Activated T-helper 2 cell treated with anti-CD3 and anti-CD28 coated beads, Interferon-gamma antibody, Interleukin-2, Interleukin-4, amounts not matched to agents 10 μg/mL and 5 μg/mL and 100 μg/mL, durations not matched to agents 14 hours and 24 hours and 36 hours (primary cell): ENCODE measurements at regions of chr7 and their contacts with region 1.

Region 1: DNA sequence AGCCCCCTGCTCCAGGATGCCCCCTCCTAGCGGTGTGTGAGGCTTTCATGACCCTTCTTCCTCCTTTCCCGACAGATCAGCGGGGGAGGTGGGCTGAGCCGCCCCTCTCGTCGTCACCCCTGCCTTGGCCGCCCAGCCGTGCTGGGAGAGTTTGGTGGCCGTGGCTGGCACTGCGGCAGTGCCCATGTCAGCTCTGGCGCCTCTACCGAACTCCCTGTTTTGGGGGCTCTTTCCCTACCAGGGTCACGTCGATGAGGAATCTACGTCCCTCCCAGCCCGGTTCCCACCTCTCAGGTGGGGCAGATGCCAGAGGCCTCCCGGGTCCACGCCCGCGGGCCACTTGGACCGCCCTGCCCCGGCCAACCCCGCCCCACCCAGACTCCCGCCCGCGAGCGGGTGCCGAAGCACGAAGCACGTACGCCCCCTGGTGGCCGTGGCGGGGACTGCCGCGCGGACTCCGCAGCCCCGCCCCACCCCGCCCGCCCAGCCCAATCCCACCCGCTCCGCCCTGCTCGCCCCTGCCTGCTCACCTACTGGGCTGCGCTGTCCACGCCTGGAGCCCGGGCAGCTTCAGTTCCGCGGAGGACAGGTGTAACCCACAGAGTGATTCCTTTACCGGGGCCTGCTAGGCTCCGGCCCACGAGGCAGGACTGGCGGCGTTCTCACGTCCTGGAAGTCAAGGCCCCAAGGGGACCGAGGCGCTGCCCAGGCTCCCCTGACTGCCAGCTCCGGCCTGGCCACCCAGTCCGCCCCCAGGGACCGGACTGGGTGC is 127.1 kb downstream of the UBE2H start:
- DNase-seq: peak; percentile 80
- H3K4me3 Mint-ChIP-seq: peak overlapping the region; percentile 91
- H3K27ac Mint-ChIP-seq: peak overlapping the region; percentile 52
- H3K4me1 Mint-ChIP-seq: peaks cover 14% of the 10 kb centered on the region
- H3K27me3 Mint-ChIP-seq: peaks cover 4% of the 10 kb centered on the region

Region 2: GRCh38 chr7:129224251-129225205 is 601.2 kb before region 1 on chr7 and contains the start of gene AHCYL2:
- intact Hi-C with region 1: loop called (anchors 1 kb)
- DNase-seq: peak; percentile 94
- H3K4me3 Mint-ChIP-seq: peak within 1 kb of the TSS; percentile 94
- H3K27ac Mint-ChIP-seq: peak within 1 kb of the TSS; percentile 96
- H3K4me1 Mint-ChIP-seq: peaks cover 22% of the 10 kb centered on the region
- H3K27me3 Mint-ChIP-seq: no peaks in the 10 kb centered on the region
- total RNA-seq, gene AHCYL2: 14.7 and 15.1 TPM in 2 replicates

Region 3: DNA sequence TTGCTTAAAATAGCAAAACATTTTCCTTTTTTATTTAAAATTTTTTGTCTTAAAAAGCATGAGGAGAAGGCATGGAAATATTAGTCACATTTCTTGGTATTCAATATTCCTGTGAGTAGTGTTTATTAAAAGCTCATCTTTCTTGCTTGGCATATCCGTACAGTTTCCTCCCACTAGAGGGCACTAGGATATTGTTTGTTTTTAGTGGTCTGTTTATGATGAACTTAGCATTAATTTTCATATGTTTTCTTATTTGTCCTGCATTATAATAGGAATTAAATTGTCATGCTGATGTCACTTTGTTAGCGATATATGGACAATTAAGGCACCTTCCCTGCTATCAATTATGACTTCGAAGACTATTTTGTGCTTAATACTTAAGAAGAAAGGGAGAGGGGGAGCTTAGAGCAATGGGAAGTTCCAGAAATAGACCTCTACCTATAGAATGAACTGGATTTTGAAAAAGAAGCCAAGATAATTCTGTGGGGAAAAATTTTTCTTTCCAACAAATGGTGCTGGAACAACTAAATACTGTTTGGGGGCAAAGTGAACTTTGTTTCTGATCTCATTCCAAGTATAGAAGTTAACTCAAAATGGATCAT is 482.5 kb before region 1 on chr7:
- intact Hi-C with region 1: loop called (anchors 1 kb)
- DNase-seq: no peak
- H3K4me3 Mint-ChIP-seq: no peak overlapping the region
- H3K27ac Mint-ChIP-seq: peak overlapping the region; percentile 59
- H3K4me1 Mint-ChIP-seq: peaks cover 38% of the 10 kb centered on the region
- H3K27me3 Mint-ChIP-seq: peaks cover 2% of the 10 kb centered on the region

Region 4: DNA sequence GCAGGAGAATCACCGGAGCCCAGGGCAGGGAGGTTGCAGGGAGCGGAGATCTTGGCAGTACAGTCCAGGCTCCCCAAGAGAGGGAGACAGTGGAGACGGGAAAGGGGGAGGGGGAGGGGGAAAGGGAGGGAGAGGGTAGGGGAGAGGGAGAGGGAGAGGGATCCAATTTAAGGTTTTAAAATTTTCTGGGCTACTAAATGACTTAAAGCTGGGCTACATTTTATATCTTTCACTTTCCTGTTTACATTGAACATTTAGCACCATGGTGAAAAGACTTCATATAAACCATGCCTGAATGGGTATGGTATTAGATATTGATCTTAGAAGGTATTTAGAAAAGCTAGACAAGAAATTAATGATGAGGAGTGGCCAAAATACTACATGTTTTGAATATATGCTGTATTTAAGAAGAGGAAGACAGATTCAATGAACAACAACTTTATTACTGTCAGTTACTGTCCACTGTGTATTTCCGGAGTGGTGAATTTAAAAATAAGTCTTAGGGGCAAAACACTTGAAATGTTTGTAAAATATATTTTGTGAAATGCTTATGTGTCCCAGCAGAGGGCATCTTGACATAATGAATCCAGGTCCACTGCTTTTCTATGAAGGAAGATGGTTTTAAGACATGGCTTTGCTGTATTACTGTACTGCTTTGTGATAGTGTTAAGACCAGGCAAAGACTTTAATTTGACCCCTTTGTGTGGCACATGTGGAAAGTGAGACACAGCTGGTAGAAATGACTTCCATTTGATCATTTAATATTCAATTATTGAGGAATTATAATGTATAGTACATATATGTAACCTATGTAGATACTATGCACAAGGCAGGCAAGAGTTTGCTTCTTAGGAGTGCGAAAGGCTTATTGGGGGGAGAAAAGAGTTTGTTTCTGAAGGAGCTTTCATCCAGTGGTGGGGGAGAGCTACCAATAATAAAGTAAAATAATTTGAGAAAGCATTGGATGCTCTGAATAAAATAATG is 161.4 kb before region 1 on chr7:
- intact Hi-C with region 1: loop called (anchors 5 kb)
- DNase-seq: no peak
- H3K4me3 Mint-ChIP-seq: no peak overlapping the region
- H3K27ac Mint-ChIP-seq: no peak overlapping the region
- H3K4me1 Mint-ChIP-seq: peaks cover 6% of the 10 kb centered on the region
- H3K27me3 Mint-ChIP-seq: no peaks in the 10 kb centered on the region

Region 5: DNA sequence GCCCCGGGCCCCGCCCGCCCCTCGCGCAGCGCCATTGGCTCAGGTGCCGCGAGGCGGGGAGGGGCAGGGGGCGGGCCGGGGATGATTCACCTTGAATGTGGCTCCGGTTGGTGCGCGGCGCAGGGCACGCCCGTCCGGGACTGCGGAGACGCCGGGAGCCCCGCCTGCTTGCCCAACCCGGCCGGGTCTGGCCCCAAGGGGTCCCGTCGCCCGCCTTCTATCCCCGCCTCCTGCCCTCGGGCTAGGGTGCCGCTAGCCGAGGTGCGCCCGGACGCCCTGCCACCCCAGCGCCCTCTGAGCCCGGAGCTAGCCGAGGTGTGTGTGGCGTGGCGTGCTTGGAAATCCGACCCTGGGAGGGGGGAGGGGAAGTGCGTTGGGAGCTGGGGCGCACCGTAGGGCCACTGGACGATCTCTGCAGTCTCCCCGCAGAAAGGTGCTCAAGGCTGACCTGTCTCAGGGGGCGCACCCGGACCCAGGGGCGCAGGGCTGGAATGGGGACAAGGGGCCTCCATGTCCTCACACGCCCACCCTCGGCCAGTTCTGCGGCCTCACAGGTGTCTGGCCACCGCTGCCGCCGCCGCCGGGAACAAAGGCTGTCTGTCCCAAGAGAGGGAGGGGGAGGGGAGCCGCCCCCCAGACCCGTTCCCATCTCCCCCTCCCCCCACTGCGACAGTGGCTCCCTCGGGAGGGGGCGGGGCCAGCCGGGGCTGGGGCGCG is 45.3 kb before region 1 on chr7:
- intact Hi-C with region 1: loop called (anchors 2 kb)
- DNase-seq: peak; percentile 44
- H3K4me3 Mint-ChIP-seq: peak overlapping the region; percentile 58
- H3K27ac Mint-ChIP-seq: no peak overlapping the region
- H3K4me1 Mint-ChIP-seq: peaks cover 22% of the 10 kb centered on the region
- H3K27me3 Mint-ChIP-seq: peaks cover 61% of the 10 kb centered on the region

Region 6: GRCh38 chr7:130010689-130011412 is 185.2 kb after region 1 on chr7:
- intact Hi-C with region 1: loop called (anchors 1 kb)
- DNase-seq: peak; percentile 77
- H3K4me3 Mint-ChIP-seq: no peak overlapping the region
- H3K27ac Mint-ChIP-seq: peak overlapping the region; percentile 76
- H3K4me1 Mint-ChIP-seq: peaks cover 7% of the 10 kb centered on the region
- H3K27me3 Mint-ChIP-seq: no peaks in the 10 kb centered on the region